Caco-2 (cell line): ENCODE measurements at regions of chr7 and their contacts with region 1.

Region 1: GRCh38 chr7:116258734-116259133 is 48.4 kb downstream of the TES start:
- DNase-seq: peak in 1 of 2 experiments; percentile 55
- H3K4me3 ChIP-seq: no peak overlapping the region
- H3K4me3 Mint-ChIP-seq: no peak overlapping the region
- H3K27ac Mint-ChIP-seq: no peak overlapping the region
- H3K4me1 ChIP-seq: peaks cover 12% of the 10 kb centered on the region
- H3K4me1 Mint-ChIP-seq: peaks cover 17% of the 10 kb centered on the region
- H3K27me3 ChIP-seq: no peaks in the 10 kb centered on the region
- H3K27me3 Mint-ChIP-seq: no peaks in the 10 kb centered on the region
- CTCF ChIP-seq: peak; percentile 72 to 83

Region 2: DNA sequence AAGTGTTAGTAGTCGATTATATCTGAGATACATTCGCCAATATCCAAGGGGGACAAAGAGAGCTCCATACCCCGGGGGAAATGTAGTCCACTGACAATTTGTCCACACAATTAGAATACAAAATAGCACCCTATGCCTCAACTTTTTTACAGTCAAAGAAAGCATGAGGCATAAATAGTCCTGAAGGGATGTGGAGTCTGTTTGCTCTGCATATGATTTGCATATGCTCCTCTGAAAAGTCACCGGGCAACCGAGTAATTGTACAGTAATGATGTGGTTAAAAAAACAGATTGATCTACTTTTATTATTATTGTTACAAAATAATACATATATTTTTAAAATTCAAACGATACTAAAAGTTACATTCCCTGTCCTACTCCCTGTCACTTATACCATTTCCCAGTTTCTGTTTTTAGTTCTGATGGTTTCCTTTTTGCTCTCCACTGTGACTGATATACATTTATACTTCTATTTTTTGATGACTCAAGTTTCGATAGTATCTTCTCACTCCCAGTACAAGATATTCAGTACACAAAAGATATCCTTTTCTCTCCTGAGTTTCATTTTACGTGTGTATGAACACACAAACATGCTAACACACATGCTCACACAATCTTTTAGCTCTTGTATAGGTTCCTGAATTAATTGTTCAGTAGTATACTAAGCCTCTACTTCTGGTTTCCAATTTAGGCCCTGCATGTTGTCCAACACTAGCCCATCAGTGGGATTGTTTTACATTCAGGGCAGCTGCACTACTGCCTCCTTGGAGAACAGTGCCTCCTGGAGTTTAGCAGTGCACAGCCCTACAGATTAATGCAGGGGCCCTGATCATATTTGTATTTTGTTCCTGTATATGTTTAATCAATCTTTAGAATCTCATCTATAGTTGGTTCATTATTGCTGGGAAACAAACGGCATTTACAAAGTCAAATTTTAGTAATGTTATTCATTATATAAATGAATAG is 82.5 kb after region 1 on chr7:
- CTCF ChIA-PET with region 1: no interaction called
- POLR2A ChIA-PET with region 1: no interaction called
- intact Hi-C with region 1: loop called (anchors 1 kb)
- DNase-seq: peak in 1 of 2 experiments; percentile 12
- H3K4me3 ChIP-seq: no peak overlapping the region
- H3K4me3 Mint-ChIP-seq: no peak overlapping the region
- H3K27ac Mint-ChIP-seq: no peak overlapping the region
- H3K4me1 ChIP-seq: peaks cover 16% of the 10 kb centered on the region
- H3K4me1 Mint-ChIP-seq: peaks cover 15% of the 10 kb centered on the region
- H3K27me3 ChIP-seq: no peaks in the 10 kb centered on the region
- H3K27me3 Mint-ChIP-seq: no peaks in the 10 kb centered on the region
- CTCF ChIP-seq: peak in 1 of 2 experiments; percentile 23

Region 3: DNA sequence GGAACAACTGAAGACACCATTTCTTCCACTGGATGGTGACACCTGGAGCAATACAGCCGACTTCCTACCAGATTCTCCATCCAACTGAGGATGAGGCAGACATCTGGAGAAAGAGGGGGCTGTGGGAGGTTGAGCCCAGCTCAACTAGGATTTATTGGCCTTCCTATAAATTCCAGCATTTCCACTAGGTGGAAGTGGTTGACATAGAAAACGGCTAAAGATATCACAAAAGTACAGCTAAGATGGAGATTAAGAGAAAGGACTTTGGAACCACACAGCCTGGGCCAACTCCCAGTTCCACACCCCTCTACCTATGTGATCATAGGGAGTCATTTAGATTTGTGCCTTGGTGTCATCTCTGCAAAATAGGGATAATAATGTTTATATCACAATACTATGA is 179.5 kb after region 1 on chr7:
- CTCF ChIA-PET with region 1: no interaction called
- POLR2A ChIA-PET with region 1: no interaction called
- intact Hi-C with region 1: loop called (anchors 2 kb)
- DNase-seq: peak; percentile 42 to 47
- H3K4me3 ChIP-seq: no peak overlapping the region
- H3K4me3 Mint-ChIP-seq: no peak overlapping the region
- H3K27ac Mint-ChIP-seq: no peak overlapping the region
- H3K4me1 ChIP-seq: peaks cover 24% of the 10 kb centered on the region
- H3K4me1 Mint-ChIP-seq: peaks cover 4% of the 10 kb centered on the region
- H3K27me3 ChIP-seq: no peaks in the 10 kb centered on the region
- H3K27me3 Mint-ChIP-seq: no peaks in the 10 kb centered on the region
- CTCF ChIP-seq: peak; percentile 19 to 41

Region 4: GRCh38 chr7:116525913-116526861 is 267.5 kb after region 1 on chr7:
- CTCF ChIA-PET with region 1: interaction called, 3 read pairs
- POLR2A ChIA-PET with region 1: no interaction called
- intact Hi-C with region 1: loop called (anchors 1 kb)
- DNase-seq: peak; percentile 75 to 88
- H3K4me3 ChIP-seq: peak overlapping the region; percentile 60
- H3K4me3 Mint-ChIP-seq: peak overlapping the region; percentile 94
- H3K27ac Mint-ChIP-seq: peak overlapping the region; percentile 52
- H3K4me1 ChIP-seq: peaks cover 10% of the 10 kb centered on the region; the same call in 1 of the 2 replicates
- H3K4me1 Mint-ChIP-seq: no peaks in the 10 kb centered on the region
- H3K27me3 ChIP-seq: no peaks in the 10 kb centered on the region
- H3K27me3 Mint-ChIP-seq: no peaks in the 10 kb centered on the region
- CTCF ChIP-seq: peak; percentile 66 to 91